ENCODE measurements at regions of chr6 and their contacts with region 1.

Region 1: GRCh38 chr6:155530219-155530834 is 74.7 kb upstream of the NOX3 start:
- DNase-seq: peak in 3 of 35 experiments; percentile 0 to 52 (median 1)
- ATAC-seq: no peak
- H3K4me3 ChIP-seq: no peak overlapping the region
- H3K4me3 Mint-ChIP-seq: no peak overlapping the region
- H3K27ac ChIP-seq: no peak overlapping the region
- H3K27ac Mint-ChIP-seq: no peak overlapping the region
- H3K4me1 ChIP-seq: peaks cover 0 to 4% of the 10 kb centered on the region in 2 experiments
- H3K4me1 Mint-ChIP-seq: peaks cover 4 to 7% (median 5%) of the 10 kb centered on the region in 3 donors
- H3K27me3 ChIP-seq: no peaks in the 10 kb centered on the region
- H3K27me3 Mint-ChIP-seq: no peaks in the 10 kb centered on the region

Region 2: DNA sequence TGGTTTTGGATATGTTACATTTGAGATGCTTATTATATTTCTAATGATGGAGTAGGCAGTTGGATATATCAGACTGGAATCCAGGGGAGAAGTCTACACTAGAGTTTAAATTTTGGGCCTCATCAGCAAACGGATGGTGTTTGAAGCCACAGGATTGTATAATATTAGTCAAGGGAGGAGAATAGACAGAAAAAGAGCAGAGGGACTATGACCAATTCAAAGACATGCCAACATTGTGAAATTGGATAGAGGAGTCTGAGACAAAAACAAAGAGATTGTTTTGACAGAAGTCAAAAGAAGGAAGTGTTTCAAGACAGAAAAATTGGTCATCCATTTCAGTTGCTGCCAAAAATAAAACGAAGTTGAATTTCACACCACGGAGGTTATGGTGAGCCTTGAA is 141.2 kb before region 1 on chr6:
- CTCF ChIA-PET with region 1: no interaction called
- POLR2A ChIA-PET with region 1: no interaction called
- DNase-seq: no peak
- ATAC-seq: no peak
- H3K4me3 ChIP-seq: no peak overlapping the region
- H3K4me3 Mint-ChIP-seq: no peak overlapping the region
- H3K27ac ChIP-seq: no peak overlapping the region
- H3K27ac Mint-ChIP-seq: no peak overlapping the region
- H3K4me1 ChIP-seq: no peaks in the 10 kb centered on the region
- H3K4me1 Mint-ChIP-seq: peaks cover 0 to 7% (median 5%) of the 10 kb centered on the region in 3 donors
- H3K27me3 ChIP-seq: no peaks in the 10 kb centered on the region
- H3K27me3 Mint-ChIP-seq: peaks cover 0 to 10% of the 10 kb centered on the region in 2 donors

Region 3: GRCh38 chr6:156269751-156270369 is 739.5 kb after region 1 on chr6:
- CTCF ChIA-PET with region 1: no interaction called
- POLR2A ChIA-PET with region 1: interaction called in 1 of 2 experiments, 12 read pairs
- DNase-seq: peak in 19 of 35 experiments; percentile 1 to 55 (median 7)
- ATAC-seq: peak; percentile 66 to 86 (median 80)
- H3K4me3 ChIP-seq: peak overlapping the region in 1 of 2 donors; percentile 74
- H3K4me3 Mint-ChIP-seq: peak overlapping the region; percentile 58 to 67 (median 58)
- H3K27ac ChIP-seq: no peak overlapping the region
- H3K27ac Mint-ChIP-seq: peak overlapping the region; percentile 41 to 79
- H3K4me1 ChIP-seq: peaks cover 6 to 16% of the 10 kb centered on the region in 2 experiments
- H3K4me1 Mint-ChIP-seq: peaks cover 19 to 23% (median 20%) of the 10 kb centered on the region in 3 donors
- H3K27me3 ChIP-seq: no peaks in the 10 kb centered on the region
- H3K27me3 Mint-ChIP-seq: no peaks in the 10 kb centered on the region